ENCODE measurements at regions of chr11 and their contacts with region 1.

Region 1: GRCh38 chr11:112113539-112114457 is 27.1 kb downstream of the SDHD start:
- DNase-seq: peak; percentile 64 to 73 (median 65)
- H3K4me3 ChIP-seq: no peak overlapping the region
- H3K27ac ChIP-seq: no peak overlapping the region
- H3K4me1 ChIP-seq: peaks cover 0 to 4% (median 2%) of the 10 kb centered on the region in 4 experiments
- H3K27me3 ChIP-seq: no peaks in the 10 kb centered on the region

Region 2: DNA sequence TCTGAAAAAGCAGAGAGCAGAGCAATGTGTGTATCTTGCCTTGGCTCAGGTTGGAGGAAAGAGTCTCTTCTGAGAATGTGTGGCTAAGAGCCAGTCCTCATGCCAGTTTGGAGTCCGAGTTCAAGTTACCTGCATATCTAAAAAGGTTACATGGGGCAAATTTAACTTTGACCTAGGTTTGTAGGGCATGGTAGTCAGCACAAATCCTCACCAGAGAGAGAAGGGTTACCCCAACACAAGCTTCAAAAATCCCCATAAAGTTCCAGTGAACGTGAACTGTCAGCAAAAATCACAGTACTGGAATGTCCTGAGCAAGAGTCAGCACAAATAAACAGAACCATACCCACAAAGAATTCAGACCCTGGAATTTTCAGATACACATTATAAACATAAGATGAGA is 13.3 kb before region 1 on chr11:
- CTCF ChIA-PET with region 1: interaction called, 10 read pairs
- POLR2A ChIA-PET with region 1: interaction called, 3 read pairs
- DNase-seq: no peak
- H3K4me3 ChIP-seq: no peak overlapping the region
- H3K27ac ChIP-seq: no peak overlapping the region
- H3K4me1 ChIP-seq: no peaks in the 10 kb centered on the region
- H3K27me3 ChIP-seq: no peaks in the 10 kb centered on the region

Region 3: DNA sequence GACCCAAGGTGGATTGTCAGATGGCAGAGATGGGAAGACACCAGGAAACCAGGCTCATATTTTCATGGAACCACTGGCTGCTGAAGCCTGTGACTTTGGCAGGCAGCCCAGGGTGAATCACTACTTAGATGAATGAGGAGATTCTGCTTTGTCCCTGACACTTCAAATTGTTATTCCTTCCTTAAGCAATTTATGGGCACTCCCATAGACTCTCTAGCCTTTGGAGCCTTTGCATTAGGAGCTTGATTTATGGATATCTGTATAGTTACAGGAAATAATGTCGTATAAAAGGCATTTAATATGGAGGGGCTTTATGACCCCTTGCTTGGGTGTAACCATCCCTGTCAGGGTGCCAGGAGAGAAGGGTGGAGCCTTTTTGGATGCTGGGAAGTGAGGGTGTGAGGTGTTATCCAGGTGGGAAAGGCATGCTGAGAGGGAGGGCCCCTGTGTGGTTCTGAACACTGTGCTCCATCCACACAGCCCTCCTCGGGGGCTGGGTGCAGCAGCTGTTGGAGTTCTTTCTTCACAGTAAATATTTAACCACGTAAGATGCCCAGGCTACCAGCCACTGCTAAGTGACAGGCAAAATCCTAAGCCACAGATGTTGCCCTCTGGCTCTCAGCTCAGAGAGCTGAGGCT is 14.8 kb after region 1 on chr11:
- CTCF ChIA-PET with region 1: interaction called, 45 read pairs
- POLR2A ChIA-PET with region 1: no interaction called
- DNase-seq: peak in 2 of 3 donors; percentile 23 to 27
- H3K4me3 ChIP-seq: no peak overlapping the region
- H3K27ac ChIP-seq: no peak overlapping the region
- H3K4me1 ChIP-seq: peaks cover 0 to 22% (median 13%) of the 10 kb centered on the region in 4 experiments
- H3K27me3 ChIP-seq: no peaks in the 10 kb centered on the region

Region 4: DNA sequence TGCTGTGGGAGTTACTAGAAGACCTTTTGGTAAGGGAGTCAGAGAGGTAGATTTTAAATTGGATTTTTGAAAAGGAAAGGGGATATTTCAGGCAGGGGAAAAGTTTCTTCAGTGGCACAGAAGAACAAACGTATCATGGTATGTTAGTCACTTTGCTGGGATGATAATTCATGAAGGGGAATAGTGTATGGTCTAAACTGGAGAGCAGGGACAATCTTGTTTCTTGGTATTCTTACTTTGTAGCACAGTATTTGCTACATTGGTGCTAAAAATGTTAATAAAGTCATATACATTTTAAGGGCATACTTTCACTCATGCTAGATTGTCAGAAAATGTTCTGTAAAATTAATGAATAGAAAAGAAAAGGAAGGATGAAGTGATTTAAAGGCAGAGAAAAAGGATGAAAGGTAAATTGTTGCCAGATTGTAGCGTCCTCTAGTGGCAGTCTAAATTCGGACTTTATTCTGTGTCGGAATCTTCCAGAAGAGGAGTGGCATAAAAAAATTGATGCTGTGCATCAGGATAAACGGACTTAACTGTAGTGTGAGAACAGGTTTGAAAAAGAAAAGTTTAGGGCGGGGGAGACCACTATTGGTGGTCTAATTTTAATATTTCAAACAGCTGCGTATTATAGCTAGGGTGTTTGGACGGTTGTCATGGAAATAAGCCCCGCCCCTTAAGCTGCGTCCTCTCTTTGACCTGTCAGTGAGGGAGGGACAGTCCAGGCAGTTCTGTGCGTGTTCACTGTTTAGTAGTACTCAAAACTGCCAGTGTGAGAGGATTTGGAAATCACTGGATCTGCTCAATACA is 61.2 kb after region 1 on chr11 and contains the start of gene BCO2:
- CTCF ChIA-PET with region 1: interaction called, 16 read pairs
- POLR2A ChIA-PET with region 1: no interaction called
- DNase-seq: peak; percentile 59 to 90 (median 84)
- H3K4me3 ChIP-seq: peak within 1 kb of the TSS in 5 of 7 experiments; percentile 17 to 62 (median 39)
- H3K27ac ChIP-seq: no peak within 1 kb of the TSS
- H3K4me1 ChIP-seq: peaks cover 26 to 41% (median 36%) of the 10 kb centered on the region in 4 experiments
- H3K27me3 ChIP-seq: no peaks in the 10 kb centered on the region